KBM-7 (cell line): ENCODE measurements at regions of chr11 and their contacts with region 1.

Region 1: DNA sequence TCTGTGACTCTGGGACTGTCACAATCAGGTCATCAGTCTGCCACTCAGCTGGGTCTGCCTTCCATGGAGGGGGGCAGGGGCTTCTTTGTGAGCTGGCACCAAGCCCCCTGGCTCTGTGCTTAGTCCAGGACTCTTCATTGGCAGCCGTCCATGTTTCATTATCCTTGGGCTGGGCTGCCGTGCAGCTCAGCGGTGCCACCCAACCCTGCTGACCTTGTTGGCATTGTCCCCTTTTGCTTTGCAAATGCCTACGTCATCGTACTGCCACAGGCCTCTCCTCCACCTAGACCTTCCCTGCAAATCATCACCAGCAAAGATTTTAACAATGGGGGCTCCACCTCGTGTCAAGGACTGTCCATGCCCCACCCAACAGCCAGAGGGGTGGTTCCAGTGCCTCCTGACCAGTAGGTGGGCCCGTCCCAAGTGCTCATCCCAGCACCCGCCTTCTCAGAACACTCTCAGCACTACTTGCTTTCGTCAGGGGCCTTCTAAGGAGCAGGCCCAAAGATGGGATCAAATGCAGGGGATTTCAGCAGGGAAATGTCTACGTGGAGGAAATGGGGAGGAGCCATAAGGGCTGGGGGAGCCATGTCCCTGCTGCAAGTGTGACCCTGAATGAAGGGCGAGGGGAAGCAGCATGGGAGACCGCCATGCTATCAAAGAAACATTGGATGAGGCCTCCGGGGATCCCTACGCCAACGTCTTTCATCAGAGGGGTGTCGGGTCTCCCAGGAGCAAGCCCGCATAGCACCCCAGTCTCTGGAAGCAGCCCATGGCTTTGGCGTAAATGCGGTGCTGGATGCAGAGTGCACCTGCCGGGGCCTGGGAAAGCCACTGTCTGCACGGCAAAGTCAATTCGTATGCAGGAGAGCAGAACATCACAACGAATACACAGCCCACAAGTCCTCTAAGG is 18.2 kb downstream of the KRTAP5-6 start:
- DNase-seq: no peak

Region 2: GRCh38 chr11:1382831-1383607 is 332.2 kb before region 1 on chr11:
- in situ Hi-C with region 1: no loop called
- DNase-seq: peak; percentile 39

Region 3: GRCh38 chr11:1827095-1827813 is 112.0 kb after region 1 on chr11:
- in situ Hi-C with region 1: loop called (anchors 10 kb)
- DNase-seq: no peak